ENCODE measurements at regions of chr1 and their contacts with region 1.

Region 1: GRCh38 chr1:184973272-184974055 is 844 bp downstream of the NIBAN1 start:
- DNase-seq: peak in 1 of 9 donors; percentile 36
- ATAC-seq: peak; percentile 73
- H3K4me3 ChIP-seq: peak overlapping the region; percentile 63
- H3K4me3 Mint-ChIP-seq: peak overlapping the region; percentile 82 to 96 (median 90)
- H3K27ac ChIP-seq: peak overlapping the region; percentile 7
- H3K27ac Mint-ChIP-seq: peak overlapping the region; percentile 11 to 94 (median 58)
- H3K4me1 ChIP-seq: peaks cover 0 to 24% of the 10 kb centered on the region in 2 donors
- H3K4me1 Mint-ChIP-seq: peaks cover 9 to 56% (median 21%) of the 10 kb centered on the region in 7 donors
- H3K27me3 ChIP-seq: no peaks in the 10 kb centered on the region
- H3K27me3 Mint-ChIP-seq: peaks cover 12 to 38% (median 27%) of the 10 kb centered on the region in 5 donors

Region 2: DNA sequence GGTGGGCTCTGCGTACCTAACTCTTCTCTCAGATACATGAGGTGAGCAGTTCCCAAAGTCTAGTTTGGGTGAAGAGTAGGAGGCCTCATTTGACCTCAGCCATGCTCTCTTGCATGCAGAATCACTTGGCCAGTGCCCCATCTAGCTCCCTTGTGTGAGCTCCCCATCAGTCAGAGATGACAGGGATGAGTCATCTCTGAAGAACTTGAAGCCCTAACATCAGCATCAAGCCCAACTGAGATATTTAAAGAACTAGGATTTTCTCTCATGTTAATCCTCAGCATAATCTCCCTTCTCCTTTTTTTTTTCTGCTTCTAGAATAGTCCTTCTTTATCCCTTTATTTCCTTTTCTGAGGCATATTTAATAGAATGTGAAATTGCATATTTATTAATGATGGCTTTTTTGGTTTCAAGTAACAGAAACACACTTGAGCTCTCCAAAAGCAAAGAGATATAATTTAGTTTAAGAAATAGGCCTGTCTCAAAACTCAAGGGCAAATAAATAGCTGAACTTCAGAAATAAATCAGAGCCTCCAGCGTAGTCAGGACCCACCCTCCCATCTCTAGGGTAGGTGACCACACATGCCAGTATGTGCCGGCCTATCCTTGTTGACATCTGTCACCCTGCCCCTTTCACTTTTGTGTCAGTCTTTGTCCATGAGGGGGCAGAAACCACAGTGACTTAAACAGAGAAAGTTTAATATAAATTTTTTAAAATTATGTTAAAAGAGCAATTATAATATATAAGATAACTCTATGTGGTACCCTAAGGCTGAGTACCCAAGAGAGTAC is 809.6 kb before region 1 on chr1:
- CTCF ChIA-PET with region 1: no interaction called
- POLR2A ChIA-PET with region 1: no interaction called
- intact Hi-C with region 1: loop called in 1 of 2 experiments (anchors 5 kb)
- DNase-seq: no peak
- ATAC-seq: no peak
- H3K4me3 ChIP-seq: no peak overlapping the region
- H3K4me3 Mint-ChIP-seq: no peak overlapping the region
- H3K27ac ChIP-seq: no peak overlapping the region
- H3K27ac Mint-ChIP-seq: peak overlapping the region in 1 of 9 donors; percentile 13
- H3K4me1 ChIP-seq: no peaks in the 10 kb centered on the region
- H3K4me1 Mint-ChIP-seq: peaks cover 0 to 2% (median 0%) of the 10 kb centered on the region in 7 donors
- H3K27me3 ChIP-seq: no peaks in the 10 kb centered on the region
- H3K27me3 Mint-ChIP-seq: peaks cover 2 to 8% (median 7%) of the 10 kb centered on the region in 5 donors

Region 3: DNA sequence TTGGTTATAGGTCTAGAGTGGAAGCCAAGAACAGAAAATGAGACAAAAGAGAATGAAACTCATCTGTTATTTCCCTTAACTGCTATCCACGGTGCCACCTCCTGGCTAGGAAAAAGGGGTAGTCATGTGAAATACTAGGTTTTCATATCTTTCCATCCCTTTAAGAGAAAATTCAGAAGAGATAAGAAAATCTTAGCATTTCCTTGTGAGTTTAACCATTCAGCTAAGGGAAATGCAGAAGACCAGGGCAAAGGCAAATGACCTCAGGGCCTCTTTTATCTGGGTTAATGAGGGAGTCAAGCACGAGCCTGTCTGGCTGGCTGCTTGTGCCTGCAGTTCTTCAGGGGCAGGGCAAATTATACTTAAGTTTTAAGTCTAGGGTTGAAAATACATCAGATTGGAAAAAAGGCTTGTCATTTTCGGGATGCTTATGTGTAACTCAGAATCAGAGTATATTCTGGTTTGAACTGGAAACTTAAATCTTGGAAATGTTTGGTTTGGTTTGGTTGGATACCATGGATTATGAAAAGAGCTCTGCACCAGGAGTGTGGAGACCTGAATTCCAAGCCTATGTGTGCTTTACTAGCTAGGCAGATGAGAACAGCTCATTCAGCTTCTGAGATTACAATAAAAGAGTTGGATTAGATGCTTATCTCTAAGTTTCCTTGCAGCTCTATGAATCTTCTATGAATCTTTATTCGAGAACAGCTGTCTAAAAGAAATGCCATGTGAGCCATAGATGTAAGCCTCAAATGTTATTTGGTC is 19.1 kb before region 1 on chr1:
- CTCF ChIA-PET with region 1: no interaction called
- POLR2A ChIA-PET with region 1: interaction called, 6 read pairs
- intact Hi-C with region 1: loop called in 1 of 2 experiments (anchors 2 kb)
- DNase-seq: no peak
- ATAC-seq: no peak
- H3K4me3 ChIP-seq: no peak overlapping the region
- H3K4me3 Mint-ChIP-seq: peak overlapping the region in 1 of 10 donors; percentile 33
- H3K27ac ChIP-seq: no peak overlapping the region
- H3K27ac Mint-ChIP-seq: peak overlapping the region in 1 of 9 donors; percentile 20
- H3K4me1 ChIP-seq: peaks cover 0 to 10% of the 10 kb centered on the region in 2 donors
- H3K4me1 Mint-ChIP-seq: peaks cover 0 to 15% (median 0%) of the 10 kb centered on the region in 7 donors
- H3K27me3 ChIP-seq: no peaks in the 10 kb centered on the region
- H3K27me3 Mint-ChIP-seq: peaks cover 0 to 2% (median 0%) of the 10 kb centered on the region in 5 donors

Region 4: DNA sequence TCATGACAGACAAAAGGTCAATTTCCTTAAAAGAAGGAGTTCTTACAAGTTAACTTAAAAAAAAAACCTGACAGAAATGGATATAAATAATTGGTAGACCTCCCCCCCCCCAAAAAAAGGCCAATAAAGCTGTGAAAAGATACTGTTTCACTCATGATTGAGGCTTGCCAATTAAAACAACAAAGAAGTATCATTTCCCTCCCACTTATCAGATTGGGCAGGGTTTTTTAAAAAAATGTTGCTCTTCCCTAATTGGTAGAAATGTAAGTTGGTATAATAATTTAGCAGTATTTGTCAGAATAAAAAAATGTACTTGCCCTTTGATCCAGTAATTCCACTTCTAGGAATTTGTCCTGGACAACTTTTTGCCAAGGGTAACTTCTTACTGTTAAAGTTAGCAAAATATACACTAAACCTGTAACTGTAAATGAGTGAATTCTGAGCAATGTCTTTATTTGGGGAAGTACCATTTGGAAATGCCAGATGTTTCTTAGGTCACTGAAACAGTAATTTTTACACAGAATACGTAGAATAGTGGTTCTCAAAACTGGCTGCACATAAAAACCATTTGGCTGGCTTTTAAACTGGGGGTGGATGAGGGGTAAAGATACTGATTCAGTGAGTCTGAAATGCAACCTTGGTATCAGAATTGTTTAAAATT is 89.4 kb after region 1 on chr1:
- CTCF ChIA-PET with region 1: no interaction called
- POLR2A ChIA-PET with region 1: no interaction called
- intact Hi-C with region 1: no loop called
- DNase-seq: no peak
- ATAC-seq: peak; percentile 24
- H3K4me3 ChIP-seq: no peak overlapping the region
- H3K4me3 Mint-ChIP-seq: peak overlapping the region in 1 of 10 donors; percentile 25
- H3K27ac ChIP-seq: no peak overlapping the region
- H3K27ac Mint-ChIP-seq: no peak overlapping the region
- H3K4me1 ChIP-seq: peaks cover 0 to 9% of the 10 kb centered on the region in 2 donors
- H3K4me1 Mint-ChIP-seq: peaks cover 12 to 94% (median 87%) of the 10 kb centered on the region in 7 donors
- H3K27me3 ChIP-seq: no peaks in the 10 kb centered on the region
- H3K27me3 Mint-ChIP-seq: no peaks in the 10 kb centered on the region